SK-MEL-5 (cell line): ENCODE measurements at regions of chr7 and their contacts with region 1.

Region 1: GRCh38 chr7:83524286-83525075 is 124.5 kb downstream of the SEMA3E start:
- DNase-seq: no peak

Region 2: GRCh38 chr7:82273886-82274285 is 1250.6 kb before region 1 on chr7:
- in situ Hi-C with region 1: no loop called
- DNase-seq: no peak

Region 3: DNA sequence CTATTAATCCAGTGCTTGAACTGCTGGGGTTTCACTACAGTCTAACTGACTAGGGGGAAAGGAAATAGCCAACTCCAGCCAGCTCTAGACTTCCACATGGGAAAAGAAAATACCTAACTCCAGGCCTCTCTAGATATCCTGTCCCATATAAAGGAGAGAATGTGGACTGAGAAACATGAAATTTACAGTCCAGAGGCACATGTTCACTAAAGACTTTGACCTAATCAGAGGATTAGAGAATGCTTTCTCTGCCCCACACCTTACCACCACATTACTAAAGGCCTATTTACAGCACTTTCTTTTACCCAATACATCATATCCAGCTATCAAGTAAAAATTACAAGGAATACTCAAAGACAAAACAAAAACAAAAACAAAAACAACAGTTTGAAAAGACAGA is 526.0 kb before region 1 on chr7:
- in situ Hi-C with region 1: no loop called
- DNase-seq: no peak

Region 4: DNA sequence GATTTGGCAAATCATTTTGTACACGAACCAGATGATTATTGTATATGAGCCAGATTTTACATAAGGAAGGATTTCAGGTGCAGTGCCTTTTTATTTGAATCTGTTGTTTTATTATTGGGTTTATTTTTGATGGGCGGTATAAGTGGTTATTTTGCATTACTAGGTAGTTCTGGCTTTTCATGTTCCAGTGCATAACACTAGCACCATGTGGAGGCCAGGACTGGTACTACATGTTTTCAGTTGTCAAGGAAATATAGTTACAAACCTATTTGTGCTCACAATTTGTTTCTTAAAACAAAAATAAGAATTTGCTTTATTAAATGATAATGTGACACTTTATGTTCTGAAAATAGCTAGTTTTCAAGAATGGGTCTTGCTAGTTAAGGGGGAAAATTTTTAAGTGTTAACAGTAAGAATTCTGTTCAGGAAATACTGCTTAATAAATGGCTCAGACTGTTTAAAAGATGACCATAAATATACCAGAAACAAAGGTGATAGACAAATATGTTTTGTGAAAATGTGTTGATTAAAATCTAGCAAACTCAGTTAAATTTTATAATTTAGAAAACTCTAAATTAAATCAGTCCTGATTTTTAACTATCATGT is 131.6 kb after region 1 on chr7:
- in situ Hi-C with region 1: loop called (anchors 25 kb)
- DNase-seq: peak; percentile 69